Caco-2 (cell line): ENCODE measurements at regions of chr7 and their contacts with region 1.

Region 1: DNA sequence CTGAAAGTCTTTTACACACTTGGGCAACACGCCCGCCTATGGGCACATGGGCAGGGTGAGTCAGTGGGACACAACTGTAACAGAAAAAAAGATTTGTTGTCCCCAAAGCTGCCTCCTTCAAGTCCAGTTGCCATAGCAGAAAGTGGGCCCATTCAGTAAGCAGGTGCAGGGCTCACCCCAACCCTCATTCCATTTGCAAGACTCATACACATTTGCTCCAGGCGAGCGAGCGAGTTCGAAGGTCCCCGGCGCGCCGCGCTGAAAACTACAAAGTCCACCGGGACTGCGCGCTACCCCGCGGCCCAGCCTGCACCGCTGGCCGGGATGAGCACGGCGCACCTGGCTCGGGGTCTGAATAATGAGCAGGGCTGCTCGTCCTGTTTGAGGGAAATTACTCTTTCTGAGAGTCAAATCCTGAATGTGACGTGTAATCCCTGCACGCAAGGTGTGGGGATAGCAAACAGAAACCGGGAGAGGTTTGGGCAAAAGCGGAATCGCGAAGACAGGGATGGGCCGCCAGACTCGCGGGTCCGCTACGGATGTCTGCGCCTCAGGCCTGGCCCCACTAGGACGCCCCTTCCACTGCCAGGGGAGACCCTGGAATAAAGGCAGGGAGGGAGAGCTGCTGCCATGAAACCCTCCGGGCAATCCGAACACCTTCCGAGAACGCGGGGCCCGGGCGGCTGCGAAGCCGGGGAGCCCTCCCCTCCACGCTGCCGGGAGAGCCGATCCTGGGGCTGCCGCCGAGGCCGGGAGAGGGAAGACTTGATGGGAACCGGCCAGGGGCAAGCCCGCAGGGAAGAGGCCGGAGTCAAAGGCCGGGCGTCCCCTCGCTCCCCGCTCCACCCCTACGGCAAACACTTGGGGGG is 982 bp downstream of the COBL start:
- DNase-seq: peak; percentile 89 to 91
- H3K4me3 ChIP-seq: peak overlapping the region; percentile 93
- H3K4me3 Mint-ChIP-seq: peak overlapping the region; percentile 93
- H3K27ac Mint-ChIP-seq: peak overlapping the region; percentile 96
- H3K4me1 ChIP-seq: peaks cover 64% of the 10 kb centered on the region
- H3K4me1 Mint-ChIP-seq: peaks cover 47% of the 10 kb centered on the region
- H3K27me3 ChIP-seq: no peaks in the 10 kb centered on the region
- H3K27me3 Mint-ChIP-seq: no peaks in the 10 kb centered on the region
- CTCF ChIP-seq: no peak

Region 2: DNA sequence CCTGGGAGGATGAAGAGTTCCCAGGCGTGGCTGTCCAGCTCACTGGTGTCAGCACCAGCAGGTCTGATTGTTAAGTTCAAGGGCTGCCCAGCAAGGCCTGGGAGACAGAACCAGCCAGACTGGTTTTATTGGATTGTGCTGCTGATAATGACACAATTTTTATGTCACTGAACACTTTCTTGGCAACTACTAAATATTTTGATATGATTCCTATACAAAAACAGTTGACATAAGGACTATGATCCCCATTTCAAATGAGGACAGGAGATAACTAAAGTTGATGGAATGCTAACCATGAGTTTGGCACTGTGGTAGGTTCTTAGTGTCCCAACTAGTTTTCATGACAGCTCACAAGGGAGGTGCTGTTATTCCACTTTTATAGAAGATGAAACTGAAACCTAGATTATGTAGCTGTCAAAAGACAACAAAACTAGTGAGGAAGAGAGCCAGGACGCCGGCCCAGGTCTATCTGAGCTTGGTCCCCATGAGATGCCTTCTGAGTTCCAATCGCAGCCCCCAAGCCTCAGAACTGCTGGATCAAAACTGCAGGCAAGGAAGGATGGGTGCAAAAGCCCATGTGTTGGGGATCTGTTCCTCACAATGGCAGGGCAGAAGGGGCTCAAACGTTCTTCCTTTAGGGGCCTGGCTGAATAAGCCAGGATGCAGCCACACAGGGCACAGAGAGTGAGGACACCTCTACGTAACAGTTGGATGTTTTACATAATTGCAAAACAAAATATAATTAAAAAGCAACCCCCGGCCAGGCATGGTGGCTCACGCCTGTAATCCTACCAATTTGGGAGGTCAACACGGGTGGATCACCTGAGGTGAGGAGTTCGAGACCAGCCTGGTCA is 51.8 kb before region 1 on chr7:
- CTCF ChIA-PET with region 1: no interaction called
- POLR2A ChIA-PET with region 1: no interaction called
- intact Hi-C with region 1: loop called (anchors 10 kb)
- DNase-seq: peak; percentile 64 to 72
- H3K4me3 ChIP-seq: no peak overlapping the region
- H3K4me3 Mint-ChIP-seq: no peak overlapping the region
- H3K27ac Mint-ChIP-seq: no peak overlapping the region
- H3K4me1 ChIP-seq: peaks cover 35% of the 10 kb centered on the region
- H3K4me1 Mint-ChIP-seq: peaks cover 29% of the 10 kb centered on the region
- H3K27me3 ChIP-seq: no peaks in the 10 kb centered on the region
- H3K27me3 Mint-ChIP-seq: no peaks in the 10 kb centered on the region
- CTCF ChIP-seq: no peak

Region 3: GRCh38 chr7:51299391-51300133 is 16.1 kb before region 1 on chr7:
- CTCF ChIA-PET with region 1: no interaction called
- POLR2A ChIA-PET with region 1: no interaction called
- intact Hi-C with region 1: loop called (anchors 2 kb)
- DNase-seq: no peak
- H3K4me3 ChIP-seq: no peak overlapping the region
- H3K4me3 Mint-ChIP-seq: no peak overlapping the region
- H3K27ac Mint-ChIP-seq: no peak overlapping the region
- H3K4me1 ChIP-seq: peaks cover 20% of the 10 kb centered on the region
- H3K4me1 Mint-ChIP-seq: peaks cover 13% of the 10 kb centered on the region
- H3K27me3 ChIP-seq: no peaks in the 10 kb centered on the region
- H3K27me3 Mint-ChIP-seq: no peaks in the 10 kb centered on the region
- CTCF ChIP-seq: peak in 1 of 2 experiments; percentile 21

Region 4: GRCh38 chr7:51328351-51328801 is 12.7 kb after region 1 on chr7:
- CTCF ChIA-PET with region 1: no interaction called
- POLR2A ChIA-PET with region 1: interaction called, 10 read pairs
- intact Hi-C with region 1: loop called (anchors 1 kb)
- DNase-seq: no peak
- H3K4me3 ChIP-seq: no peak overlapping the region
- H3K4me3 Mint-ChIP-seq: no peak overlapping the region
- H3K27ac Mint-ChIP-seq: no peak overlapping the region
- H3K4me1 ChIP-seq: peaks cover 28% of the 10 kb centered on the region
- H3K4me1 Mint-ChIP-seq: peaks cover 15% of the 10 kb centered on the region
- H3K27me3 ChIP-seq: no peaks in the 10 kb centered on the region
- H3K27me3 Mint-ChIP-seq: no peaks in the 10 kb centered on the region
- CTCF ChIP-seq: no peak

Region 5: DNA sequence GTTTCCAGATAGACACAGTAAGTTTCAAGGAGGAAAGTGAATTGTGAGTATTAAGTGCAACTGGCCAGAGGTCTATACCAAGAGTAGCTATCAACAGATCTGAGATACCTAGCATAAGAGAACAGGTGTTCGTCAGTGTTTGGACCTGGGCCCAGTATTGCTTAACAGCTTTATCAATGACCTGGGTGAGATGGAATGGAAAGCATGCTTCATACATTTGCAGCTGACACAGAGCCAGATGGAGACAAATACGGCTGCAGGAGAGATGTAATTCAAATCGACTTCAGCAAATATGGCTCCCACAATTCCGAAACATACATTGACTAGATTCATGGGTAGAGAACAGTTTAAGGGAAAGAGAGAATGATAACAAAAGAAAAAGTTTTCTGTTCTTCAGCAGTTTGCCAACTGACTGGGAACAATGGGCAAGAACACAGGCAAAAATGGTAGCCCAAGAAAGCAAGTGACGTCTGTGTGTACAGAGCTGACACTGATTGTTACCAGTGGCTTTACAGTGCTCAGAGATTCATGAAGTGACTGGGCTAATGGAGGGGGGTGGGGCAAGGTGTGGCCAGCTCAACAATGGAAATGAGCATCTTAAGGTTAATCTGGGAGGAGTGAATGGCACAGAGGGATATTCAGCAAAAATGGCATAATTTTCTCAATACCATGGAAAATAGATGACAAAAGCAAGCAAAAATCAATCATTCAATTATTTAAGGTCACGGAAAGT is 28.9 kb after region 1 on chr7:
- CTCF ChIA-PET with region 1: interaction called, 5 read pairs
- POLR2A ChIA-PET with region 1: interaction called, 10 read pairs
- intact Hi-C with region 1: loop called (anchors 1 kb)
- DNase-seq: peak; percentile 67 to 73
- H3K4me3 ChIP-seq: no peak overlapping the region
- H3K4me3 Mint-ChIP-seq: peak overlapping the region; percentile 51
- H3K27ac Mint-ChIP-seq: peak overlapping the region; percentile 76
- H3K4me1 ChIP-seq: peaks cover 60% of the 10 kb centered on the region
- H3K4me1 Mint-ChIP-seq: peaks cover 39% of the 10 kb centered on the region
- H3K27me3 ChIP-seq: no peaks in the 10 kb centered on the region
- H3K27me3 Mint-ChIP-seq: no peaks in the 10 kb centered on the region
- CTCF ChIP-seq: no peak

Region 6: GRCh38 chr7:51477323-51477722 is 161.7 kb after region 1 on chr7:
- CTCF ChIA-PET with region 1: no interaction called
- POLR2A ChIA-PET with region 1: no interaction called
- intact Hi-C with region 1: no loop called
- DNase-seq: no peak
- H3K4me3 ChIP-seq: no peak overlapping the region
- H3K4me3 Mint-ChIP-seq: no peak overlapping the region
- H3K27ac Mint-ChIP-seq: no peak overlapping the region
- H3K4me1 ChIP-seq: no peaks in the 10 kb centered on the region
- H3K4me1 Mint-ChIP-seq: no peaks in the 10 kb centered on the region
- H3K27me3 ChIP-seq: no peaks in the 10 kb centered on the region
- H3K27me3 Mint-ChIP-seq: peaks cover 2% of the 10 kb centered on the region
- CTCF ChIP-seq: no peak